Dorsolateral prefrontal cortex (tissue), 120 donors: ENCODE measurements at regions of chr6 and their contacts with region 1.

Region 1: DNA sequence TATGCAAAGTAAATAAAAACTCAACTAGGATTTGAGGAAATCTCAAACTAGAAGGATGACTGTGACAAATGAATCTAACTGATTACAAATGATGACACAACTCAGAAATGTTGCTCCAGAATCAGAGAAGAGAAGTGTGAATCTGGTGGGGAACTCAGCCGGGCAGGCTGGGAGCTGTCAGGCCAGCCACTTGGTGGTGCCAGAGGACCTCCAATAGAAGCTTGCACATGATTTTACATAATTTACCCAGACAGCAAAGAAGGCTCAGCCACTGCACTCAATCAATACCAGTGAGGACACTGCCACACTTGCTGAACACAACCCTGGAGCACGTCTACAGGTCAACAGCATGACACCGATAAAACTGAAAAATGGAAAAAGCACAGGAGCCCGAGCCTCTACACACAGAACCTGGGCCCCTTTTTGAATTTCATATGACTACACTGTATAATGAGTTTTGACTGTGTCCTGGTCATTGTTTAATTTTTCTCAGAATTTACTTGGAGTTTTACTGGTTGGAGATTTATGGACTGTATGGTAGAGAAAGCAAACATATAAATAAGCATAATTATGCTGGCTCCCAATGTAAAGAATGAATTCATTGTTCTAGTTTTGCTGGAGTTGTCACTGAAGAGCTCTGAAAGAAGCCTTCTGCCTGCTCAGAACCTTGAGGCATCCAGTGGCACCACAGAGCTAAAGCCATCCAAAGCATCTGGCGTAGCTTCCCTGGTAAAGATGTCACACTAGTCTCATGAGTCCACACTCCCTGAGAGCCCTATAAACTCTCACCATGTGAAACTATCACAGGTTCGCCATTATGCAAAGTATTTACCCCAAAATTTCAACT is 296.5 kb downstream of the THBS2 start:
- DNase-seq: peak; percentile 53 to 79 (median 72)
- H3K4me3 ChIP-seq: no peak overlapping the region
- H3K27ac ChIP-seq: peak overlapping the region in 1 of 59 donors; percentile 20
- H3K27me3 ChIP-seq: peaks cover 0 to 5% (median 0%) of the 10 kb centered on the region in 45 donors
- CTCF ChIP-seq: peak; percentile 50 to 96 (median 85)

Region 2: DNA sequence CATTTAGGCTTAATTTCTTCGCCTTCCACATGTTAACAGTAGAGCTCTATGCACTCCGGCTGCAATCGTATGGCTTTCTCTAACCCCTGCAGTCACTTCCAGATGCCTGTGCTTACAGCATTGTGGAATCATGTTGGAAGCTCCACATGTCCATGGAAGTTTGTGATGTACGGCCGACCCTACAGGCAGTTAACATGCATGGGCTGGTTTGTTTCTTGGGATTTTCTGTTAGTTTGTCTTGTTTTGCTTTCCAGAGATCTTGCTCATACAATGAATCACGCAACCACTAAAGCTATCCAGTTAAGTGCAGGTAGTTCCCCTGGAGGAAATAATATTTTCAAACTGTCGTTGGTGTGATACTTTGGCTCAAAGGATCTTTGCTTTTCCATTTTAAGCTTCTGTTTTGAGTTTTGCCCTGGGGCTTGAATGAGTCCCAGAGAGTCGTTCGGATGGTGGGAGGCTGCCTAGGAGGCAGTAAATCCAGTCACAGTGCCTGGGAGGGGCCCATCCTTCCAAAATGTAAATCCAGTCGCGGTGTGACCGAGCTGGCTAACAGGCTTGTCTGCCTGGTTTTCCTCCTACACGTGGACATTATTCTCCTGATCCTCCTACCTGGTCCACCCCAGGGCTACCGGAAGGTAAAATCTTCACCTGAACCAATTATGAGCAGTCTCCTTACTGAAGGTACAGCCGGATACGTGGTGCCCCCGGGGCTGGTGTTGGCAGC is 290.2 kb before region 1 on chr6:
- intact Hi-C with region 1: no loop called
- DNase-seq: no peak
- H3K4me3 ChIP-seq: no peak overlapping the region
- H3K27ac ChIP-seq: no peak overlapping the region
- H3K27me3 ChIP-seq: peaks cover 0 to 19% (median 0%) of the 10 kb centered on the region in 45 donors
- CTCF ChIP-seq: no peak

Region 3: DNA sequence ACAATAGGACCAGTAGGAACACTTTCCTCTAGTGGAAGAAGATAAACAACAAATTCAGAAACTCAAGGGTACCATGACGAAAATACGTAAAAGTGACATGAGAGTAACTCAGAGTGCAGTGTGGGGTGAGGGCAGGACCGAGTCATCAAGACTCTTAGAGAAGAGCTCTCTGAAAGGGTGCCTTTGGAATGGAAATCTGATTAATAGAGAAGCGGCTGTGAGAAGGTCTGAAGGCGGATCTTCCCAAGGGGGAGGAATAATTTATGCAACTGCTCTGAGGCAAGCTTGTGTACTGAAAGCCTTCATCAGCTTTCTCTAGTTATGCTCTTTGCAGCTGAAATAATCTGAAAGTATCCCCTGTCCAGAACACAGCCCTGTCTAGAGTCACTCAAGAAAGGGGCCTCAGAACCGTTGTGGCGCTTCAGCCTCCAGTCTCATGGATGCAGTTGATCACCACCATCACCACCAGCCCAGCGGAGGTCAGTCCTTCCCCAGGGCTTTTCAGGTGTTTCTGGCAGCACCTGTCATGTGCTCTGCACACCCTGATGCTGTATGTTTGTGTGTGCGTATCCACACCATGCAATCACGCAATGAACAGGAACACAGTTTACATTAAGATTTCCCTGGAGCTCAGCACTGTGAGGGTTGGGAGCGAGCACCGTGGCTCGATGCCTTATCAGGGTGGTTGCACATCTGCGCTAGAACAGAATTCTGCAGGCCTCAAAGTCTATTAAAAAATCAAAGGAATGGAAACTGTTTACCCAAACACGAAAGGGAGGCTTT is 119.7 kb before region 1 on chr6:
- intact Hi-C with region 1: no loop called
- DNase-seq: no peak
- H3K4me3 ChIP-seq: peak overlapping the region in 5 of 59 donors; percentile 2 to 23 (median 16)
- H3K27ac ChIP-seq: no peak overlapping the region
- H3K27me3 ChIP-seq: no peaks in the 10 kb centered on the region
- CTCF ChIP-seq: no peak

Region 4: GRCh38 chr6:168895102-168895812 is 61.9 kb before region 1 on chr6:
- intact Hi-C with region 1: loop called in 1 of 2 experiments (anchors 2 kb)
- DNase-seq: peak; percentile 58 to 88 (median 81)
- H3K4me3 ChIP-seq: peak overlapping the region in 50 of 59 donors; percentile 3 to 55 (median 38)
- H3K27ac ChIP-seq: peak overlapping the region in 10 of 59 donors; percentile 3 to 59 (median 30)
- H3K27me3 ChIP-seq: no peaks in the 10 kb centered on the region
- CTCF ChIP-seq: peak; percentile 84 to 98 (median 94)

Region 5: GRCh38 chr6:169326067-169326799 is 369.1 kb after region 1 on chr6:
- intact Hi-C with region 1: loop called in 1 of 2 experiments (anchors 5 kb)
- DNase-seq: peak in 6 of 10 donors; percentile 25 to 75 (median 44)
- H3K4me3 ChIP-seq: no peak overlapping the region
- H3K27ac ChIP-seq: no peak overlapping the region
- H3K27me3 ChIP-seq: peaks cover 0 to 5% (median 0%) of the 10 kb centered on the region in 45 donors
- CTCF ChIP-seq: peak in 52 of 56 donors; percentile 18 to 73 (median 45)

Region 6: GRCh38 chr6:169487579-169488436 is 530.7 kb after region 1 on chr6:
- intact Hi-C with region 1: loop called in 1 of 2 experiments (anchors 5 kb)
- DNase-seq: no peak
- H3K4me3 ChIP-seq: no peak overlapping the region
- H3K27ac ChIP-seq: no peak overlapping the region
- H3K27me3 ChIP-seq: no peaks in the 10 kb centered on the region
- CTCF ChIP-seq: peak in 51 of 56 donors; percentile 13 to 72 (median 45)